ENCODE measurements at regions of chr9 and their contacts with region 1.

Region 1: GRCh38 chr9:128688512-128689292 is at the start of gene SET:
- DNase-seq: peak; percentile 94
- ATAC-seq: peak; percentile 78
- H3K4me3 Mint-ChIP-seq: peak within 1 kb of the TSS; percentile 98
- H3K27ac Mint-ChIP-seq: peak within 1 kb of the TSS; percentile 98
- H3K4me1 Mint-ChIP-seq: peaks cover 60% of the 10 kb centered on the region
- H3K27me3 Mint-ChIP-seq: no peaks in the 10 kb centered on the region
- CTCF ChIP-seq: no peak
- total RNA-seq, gene SET: 749 to 755 TPM

Region 2: DNA sequence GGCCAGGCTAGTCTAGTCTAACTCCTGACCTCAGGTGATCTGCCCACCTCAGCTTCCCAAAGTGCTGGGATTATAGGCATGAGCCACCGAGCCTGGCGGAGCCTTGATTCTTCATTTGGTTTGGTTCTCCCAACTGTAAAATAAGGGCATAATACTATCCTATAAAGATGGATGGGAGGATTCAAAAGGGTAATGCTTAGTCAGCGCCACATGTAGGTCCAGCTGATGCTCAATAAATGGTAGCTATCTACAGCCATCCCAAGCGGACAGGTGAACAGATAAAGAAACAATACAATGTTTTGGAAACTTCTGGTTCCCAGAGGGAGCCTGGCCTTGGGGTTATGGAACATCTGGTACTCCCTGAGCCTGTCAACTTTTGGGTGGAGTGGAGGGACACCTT is 13.3 kb before region 1 on chr9:
- CTCF ChIA-PET with region 1: interaction called, 4 read pairs
- POLR2A ChIA-PET with region 1: interaction called, 14 read pairs
- intact Hi-C with region 1: no loop called
- DNase-seq: no peak
- ATAC-seq: no peak
- H3K4me3 Mint-ChIP-seq: no peak overlapping the region
- H3K27ac Mint-ChIP-seq: no peak overlapping the region
- H3K4me1 Mint-ChIP-seq: no peaks in the 10 kb centered on the region
- H3K27me3 Mint-ChIP-seq: no peaks in the 10 kb centered on the region
- CTCF ChIP-seq: no peak

Region 3: GRCh38 chr9:128702445-128702948 is 13.8 kb after region 1 on chr9 and contains the start of gene PKN3:
- CTCF ChIA-PET with region 1: interaction called, 29 read pairs
- POLR2A ChIA-PET with region 1: interaction called, 16 read pairs
- intact Hi-C with region 1: no loop called
- DNase-seq: peak; percentile 92
- ATAC-seq: peak; percentile 89
- H3K4me3 Mint-ChIP-seq: peak within 1 kb of the TSS; percentile 79
- H3K27ac Mint-ChIP-seq: peak within 1 kb of the TSS; percentile 49
- H3K4me1 Mint-ChIP-seq: peaks cover 13% of the 10 kb centered on the region
- H3K27me3 Mint-ChIP-seq: no peaks in the 10 kb centered on the region
- CTCF ChIP-seq: peak; percentile 96
- total RNA-seq, gene PKN3: 9.3 to 10.7 TPM

Region 4: GRCh38 chr9:128742401-128742800 is 53.7 kb after region 1 on chr9:
- CTCF ChIA-PET with region 1: no interaction called
- POLR2A ChIA-PET with region 1: no interaction called
- intact Hi-C with region 1: no loop called
- DNase-seq: no peak
- ATAC-seq: no peak
- H3K4me3 Mint-ChIP-seq: no peak overlapping the region
- H3K27ac Mint-ChIP-seq: no peak overlapping the region
- H3K4me1 Mint-ChIP-seq: no peaks in the 10 kb centered on the region
- H3K27me3 Mint-ChIP-seq: no peaks in the 10 kb centered on the region
- CTCF ChIP-seq: no peak

Measured in activated CD8-positive, alpha-beta T cell treated with anti-CD3 and anti-CD28 coated beads for 36 hours (primary cell).